Psoas muscle (tissue), 8 donors: ENCODE measurements at regions of chr3 and their contacts with region 1.

Region 1: GRCh38 chr3:57764794-57765193 is 8.7 kb downstream of the SLMAP start:
- DNase-seq: no peak
- ATAC-seq: no peak
- H3K4me3 ChIP-seq: no peak overlapping the region
- H3K27ac ChIP-seq: no peak overlapping the region
- H3K4me1 ChIP-seq: peaks cover 34% of the 10 kb centered on the region
- H3K27me3 ChIP-seq: no peaks in the 10 kb centered on the region
- CTCF ChIP-seq: no peak

Region 2: DNA sequence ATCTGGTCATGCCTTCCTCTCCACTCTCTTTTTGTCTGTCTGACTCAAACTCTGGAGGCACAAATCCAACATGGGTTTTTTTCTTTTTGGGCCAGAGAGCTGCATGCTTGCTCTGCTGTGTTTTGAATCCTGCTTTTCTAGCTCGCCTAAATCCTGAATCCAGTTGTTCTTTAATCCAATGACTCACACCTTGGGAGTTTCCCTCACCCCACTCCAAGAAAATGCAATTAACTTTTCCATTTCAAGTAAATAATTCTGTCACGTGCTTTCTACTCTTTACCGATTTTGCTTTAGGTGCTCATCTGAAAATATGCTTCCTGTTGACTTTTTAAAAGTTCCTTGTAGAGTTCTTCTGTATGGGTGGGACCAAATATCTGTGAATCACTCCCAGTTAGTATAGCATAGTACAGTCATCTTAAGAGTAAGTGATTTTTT is 38.9 kb after region 1 on chr3:
- intact Hi-C with region 1: loop called in 1 of 2 experiments (anchors 5 kb)
- DNase-seq: no peak
- ATAC-seq: peak; percentile 66 to 82 (median 68)
- H3K4me3 ChIP-seq: no peak overlapping the region
- H3K27ac ChIP-seq: peak overlapping the region; percentile 65
- H3K4me1 ChIP-seq: peaks cover 61% of the 10 kb centered on the region
- H3K27me3 ChIP-seq: no peaks in the 10 kb centered on the region
- CTCF ChIP-seq: no peak

Region 3: DNA sequence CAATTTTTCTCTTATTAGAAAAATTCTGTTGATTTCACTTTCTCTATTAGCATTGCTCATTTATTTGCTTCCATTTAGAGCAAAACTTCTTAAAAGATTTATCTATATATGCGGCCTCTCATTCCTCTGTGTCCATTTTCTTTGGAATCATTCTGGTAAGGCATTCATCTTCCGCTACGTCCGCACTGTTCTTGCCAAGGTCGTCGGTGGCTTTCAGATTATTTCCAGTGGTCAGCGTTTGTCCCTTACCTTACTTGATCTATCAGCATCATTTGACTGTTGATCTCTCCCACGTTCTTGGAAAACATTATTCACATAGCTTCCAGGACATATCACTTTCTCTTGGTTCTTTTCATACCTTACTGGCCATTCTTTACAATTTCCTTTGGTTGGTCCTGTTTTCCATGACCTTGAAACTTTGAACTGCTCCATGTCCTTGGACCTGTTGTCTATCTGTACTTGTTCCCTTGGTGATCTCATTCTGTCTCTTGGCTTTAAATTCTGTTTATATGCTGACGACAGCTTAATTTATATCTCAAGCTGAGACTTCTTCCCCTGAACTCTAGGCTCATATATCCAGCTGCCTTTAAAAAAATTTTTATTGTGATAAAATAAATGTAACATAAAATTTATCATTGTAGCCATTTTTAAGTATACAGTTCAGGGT is 45.8 kb after region 1 on chr3:
- intact Hi-C with region 1: loop called in 1 of 2 experiments (anchors 5 kb)
- DNase-seq: no peak
- ATAC-seq: peak in 2 of 4 donors; percentile 23 to 56
- H3K4me3 ChIP-seq: no peak overlapping the region
- H3K27ac ChIP-seq: no peak overlapping the region
- H3K4me1 ChIP-seq: peaks cover 39% of the 10 kb centered on the region
- H3K27me3 ChIP-seq: no peaks in the 10 kb centered on the region
- CTCF ChIP-seq: no peak